Panc1 (cell line): ENCODE measurements at regions of chr7 and their contacts with region 1.

Region 1: GRCh38 chr7:43784030-43785001 is 25.8 kb downstream of the BLVRA start:
- DNase-seq: no peak
- ATAC-seq: 0 out of 2 replicates have a peak, but pooled peaks have one; percentile 27
- H3K4me3 ChIP-seq: no peak overlapping the region
- H3K27ac ChIP-seq: no peak overlapping the region
- H3K4me1 ChIP-seq: no peaks in the 10 kb centered on the region
- H3K27me3 ChIP-seq: no peaks in the 10 kb centered on the region
- CTCF ChIP-seq: no peak

Region 2: DNA sequence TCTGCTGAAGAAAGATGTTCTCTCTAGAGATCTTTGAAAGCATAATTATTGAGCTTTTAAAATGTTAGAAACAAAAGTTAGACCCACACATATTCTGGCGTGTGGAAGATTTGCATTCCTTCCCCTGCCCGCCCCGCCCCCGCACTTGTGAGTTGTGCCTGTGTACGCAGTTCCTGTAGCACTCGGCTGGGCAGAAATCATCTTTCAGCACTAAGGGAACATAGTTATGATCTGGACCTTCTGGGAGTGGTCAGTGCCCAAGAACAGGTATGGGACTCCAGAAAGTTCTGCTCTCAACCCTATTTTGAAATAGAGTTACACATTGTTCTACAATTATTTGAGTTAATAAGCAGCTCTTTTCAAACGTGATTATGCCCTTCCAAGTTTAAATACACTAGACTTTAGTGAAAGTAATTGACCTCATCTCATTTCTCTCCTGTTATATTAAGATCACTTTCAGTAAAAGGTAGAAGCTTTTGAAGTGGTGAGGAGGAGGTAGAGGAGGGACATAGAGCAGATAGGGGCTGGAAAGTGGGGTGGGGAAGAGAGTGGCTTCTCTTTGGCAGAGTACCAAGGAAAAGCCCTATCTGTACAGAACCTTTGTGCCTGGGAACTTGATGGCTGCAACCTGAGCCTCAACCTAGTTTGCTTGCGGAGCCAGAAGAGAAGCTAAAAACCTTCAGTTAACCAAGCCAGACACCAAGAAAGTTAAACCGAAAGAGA is 20.1 kb before region 1 on chr7:
- CTCF ChIA-PET with region 1: interaction called, 10 read pairs
- POLR2A ChIA-PET with region 1: no interaction called
- in situ Hi-C with region 1: no loop called
- intact Hi-C with region 1: no loop called
- DNase-seq: no peak
- ATAC-seq: peak; percentile 69
- H3K4me3 ChIP-seq: peak overlapping the region in 1 of 2 experiments; percentile 49; a peak in 3 of 4 replicates
- H3K27ac ChIP-seq: peak overlapping the region; percentile 40
- H3K4me1 ChIP-seq: peaks cover 55% of the 10 kb centered on the region
- H3K27me3 ChIP-seq: no peaks in the 10 kb centered on the region
- CTCF ChIP-seq: no peak